ENCODE measurements at regions of chr18 and their contacts with region 1.

Region 1: DNA sequence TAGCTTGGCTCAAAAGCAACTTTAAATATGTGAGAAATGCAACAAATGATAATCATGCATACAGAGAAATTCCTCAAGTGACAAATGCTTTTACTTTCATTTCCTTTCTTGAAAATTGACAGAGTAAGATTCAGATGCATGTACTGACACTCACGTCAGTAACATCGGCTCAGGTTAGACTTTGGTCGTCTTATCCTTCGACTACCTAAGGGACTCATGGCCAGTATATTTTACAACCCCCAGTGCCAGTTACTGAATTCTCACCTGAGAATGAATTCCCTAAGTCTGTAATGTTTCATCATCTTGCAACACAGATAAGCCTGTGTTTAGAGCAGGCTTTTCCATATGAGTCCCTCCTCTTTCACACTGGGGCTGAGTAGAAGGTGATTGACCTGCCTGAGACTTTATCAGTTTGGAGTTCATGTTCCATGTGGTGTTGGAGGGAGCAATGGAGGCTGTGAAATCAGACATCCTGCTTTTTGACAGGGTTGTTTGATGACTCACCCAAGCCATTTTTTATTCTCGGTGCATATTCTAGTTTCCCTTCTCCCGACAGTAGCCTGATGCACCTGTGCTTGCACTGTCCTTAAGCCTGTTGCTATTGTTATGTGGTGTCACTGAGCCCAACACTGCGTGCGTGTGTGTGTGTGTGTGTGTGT is 30.5 kb upstream of the ATP8B1 start:
- DNase-seq: peak; percentile 3
- H3K4me3 Mint-ChIP-seq: peak overlapping the region; percentile 68
- H3K27ac Mint-ChIP-seq: peak overlapping the region; percentile 25
- H3K4me1 Mint-ChIP-seq: peaks cover 34% of the 10 kb centered on the region
- H3K27me3 Mint-ChIP-seq: peaks cover 14% of the 10 kb centered on the region

Region 2: DNA sequence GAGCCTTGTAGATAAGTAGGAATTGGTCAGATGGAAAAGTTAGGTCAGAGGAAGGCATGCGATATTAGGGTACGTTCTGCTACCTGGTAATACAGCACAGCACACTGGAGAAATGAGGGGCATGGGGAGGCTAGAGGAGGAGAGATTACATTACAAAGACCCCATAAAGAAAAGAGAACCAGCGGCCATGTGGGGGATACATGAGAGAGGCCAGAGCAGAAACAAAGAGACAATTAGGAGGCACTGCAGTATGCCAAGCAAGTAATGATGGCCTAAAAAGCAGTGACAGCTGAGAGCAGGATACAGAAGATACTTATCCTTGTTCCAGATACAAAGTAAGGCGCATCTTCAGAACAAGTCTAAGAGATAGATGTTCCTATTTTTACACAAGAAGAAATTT is 1235.2 kb before region 1 on chr18:
- intact Hi-C with region 1: no loop called
- DNase-seq: no peak
- H3K4me3 Mint-ChIP-seq: no peak overlapping the region
- H3K27ac Mint-ChIP-seq: no peak overlapping the region
- H3K4me1 Mint-ChIP-seq: no peaks in the 10 kb centered on the region
- H3K27me3 Mint-ChIP-seq: no peaks in the 10 kb centered on the region

Region 3: DNA sequence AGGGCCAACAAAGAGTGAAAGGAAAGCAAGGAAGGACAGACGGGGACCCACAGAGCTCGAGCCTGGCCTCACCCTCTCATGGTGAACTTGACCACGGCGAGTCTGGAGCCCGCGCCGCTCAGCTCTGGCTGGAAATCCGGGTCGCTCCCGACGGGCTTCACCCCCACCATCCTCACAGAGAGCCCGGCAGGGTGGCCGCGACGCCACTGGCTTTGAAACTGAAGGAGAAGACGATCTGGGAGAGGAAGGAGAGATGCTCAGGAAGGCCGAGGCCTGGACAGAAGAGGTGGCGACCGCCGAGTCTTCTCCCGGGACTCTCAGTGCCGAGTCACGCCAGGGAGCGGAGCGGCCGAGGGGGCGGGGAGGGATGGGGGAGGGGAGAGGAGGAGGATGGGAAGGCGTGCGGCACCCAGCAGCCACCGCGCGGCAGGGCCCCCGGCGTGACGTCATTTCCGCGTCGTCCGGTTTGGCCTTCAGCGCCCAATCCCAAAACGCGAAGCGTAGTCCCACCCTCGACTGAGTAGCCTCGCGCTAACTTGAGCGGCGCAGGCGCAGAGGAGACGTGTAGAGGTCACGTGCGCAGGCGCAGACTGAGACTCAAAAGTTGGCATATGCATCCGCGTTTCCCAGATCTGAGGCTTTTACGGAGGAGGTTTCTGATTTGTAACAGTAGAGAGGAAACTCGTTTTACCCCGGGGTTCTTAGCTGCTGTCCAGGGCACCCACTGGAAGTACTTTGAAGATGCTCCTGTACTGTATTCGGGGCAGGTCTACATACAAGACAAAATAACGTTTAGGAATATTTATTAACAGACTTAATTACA is 1195.1 kb before region 1 on chr18 and contains the start of gene TXNL1:
- intact Hi-C with region 1: loop called (anchors 2 kb)
- DNase-seq: peak; percentile 98
- H3K4me3 Mint-ChIP-seq: peak within 1 kb of the TSS; percentile 99
- H3K27ac Mint-ChIP-seq: peak within 1 kb of the TSS; percentile 97
- H3K4me1 Mint-ChIP-seq: peaks cover 55% of the 10 kb centered on the region
- H3K27me3 Mint-ChIP-seq: no peaks in the 10 kb centered on the region
- total RNA-seq, gene TXNL1: 94.2 and 100 TPM in 2 replicates

Region 4: DNA sequence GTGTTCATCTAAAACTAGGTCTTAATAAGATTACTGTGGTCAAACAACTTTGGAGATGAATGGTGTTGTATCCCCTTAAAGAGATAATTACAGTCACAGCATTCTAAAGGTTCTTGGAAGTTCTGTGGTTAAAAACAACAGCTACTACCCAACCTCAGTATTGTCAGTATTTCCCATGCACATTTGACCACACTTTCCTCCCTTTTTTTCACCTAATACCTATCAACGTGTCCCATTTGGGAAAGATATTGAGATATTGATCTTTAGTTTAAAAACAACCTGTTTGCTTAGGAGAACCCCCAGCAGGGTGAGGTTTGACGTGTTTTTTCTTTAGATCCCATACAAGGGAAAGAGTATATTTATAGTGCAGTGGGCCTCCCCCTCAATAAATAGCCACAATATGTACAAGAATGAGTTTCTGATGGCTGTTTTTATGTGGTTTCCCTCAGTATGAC is 1116.9 kb before region 1 on chr18:
- intact Hi-C with region 1: loop called (anchors 2 kb)
- DNase-seq: no peak
- H3K4me3 Mint-ChIP-seq: no peak overlapping the region
- H3K27ac Mint-ChIP-seq: peak overlapping the region; percentile 66
- H3K4me1 Mint-ChIP-seq: peaks cover 35% of the 10 kb centered on the region
- H3K27me3 Mint-ChIP-seq: no peaks in the 10 kb centered on the region

Region 5: GRCh38 chr18:57621246-57621604 is 212.3 kb before region 1 on chr18:
- intact Hi-C with region 1: loop called (anchors 2 kb)
- DNase-seq: no peak
- H3K4me3 Mint-ChIP-seq: peak overlapping the region; percentile 85
- H3K27ac Mint-ChIP-seq: peak overlapping the region; percentile 87
- H3K4me1 Mint-ChIP-seq: peaks cover 9% of the 10 kb centered on the region
- H3K27me3 Mint-ChIP-seq: no peaks in the 10 kb centered on the region

Region 6: DNA sequence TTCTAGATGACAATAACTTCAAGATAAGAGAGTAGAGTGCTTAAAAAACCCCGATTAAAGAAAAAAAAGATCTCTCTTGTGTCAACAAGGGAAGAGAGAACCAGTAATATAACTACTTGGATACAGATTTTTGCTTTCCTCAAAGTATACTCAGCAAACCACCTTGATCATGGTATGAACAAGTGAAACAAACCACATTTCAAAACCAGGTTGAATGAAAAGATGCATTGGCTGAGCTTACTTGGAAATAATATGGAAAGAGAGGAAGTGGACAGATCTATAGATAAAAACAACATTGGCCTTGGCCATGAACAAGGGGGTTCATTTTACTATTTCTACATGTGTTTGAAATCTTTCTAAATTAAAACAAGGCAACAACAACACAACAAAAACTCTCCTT is 80.5 kb before region 1 on chr18:
- intact Hi-C with region 1: loop called (anchors 1 kb)
- DNase-seq: no peak
- H3K4me3 Mint-ChIP-seq: no peak overlapping the region
- H3K27ac Mint-ChIP-seq: no peak overlapping the region
- H3K4me1 Mint-ChIP-seq: peaks cover 8% of the 10 kb centered on the region
- H3K27me3 Mint-ChIP-seq: no peaks in the 10 kb centered on the region

Region 7: GRCh38 chr18:59139371-59140298 is 1306.1 kb after region 1 on chr18 and contains the start of gene SEC11C:
- intact Hi-C with region 1: loop called (anchors 10 kb)
- DNase-seq: peak; percentile 96
- H3K4me3 Mint-ChIP-seq: peak within 1 kb of the TSS; percentile 94
- H3K27ac Mint-ChIP-seq: peak within 1 kb of the TSS; percentile 98
- H3K4me1 Mint-ChIP-seq: peaks cover 34% of the 10 kb centered on the region
- H3K27me3 Mint-ChIP-seq: peaks cover 19% of the 10 kb centered on the region
- total RNA-seq, gene SEC11C: 147 and 148 TPM in 2 replicates